ENCODE measurements at regions of chrX and their contacts with region 1.

Region 1: GRCh38 chrX:2640275-2641150 is 50.6 kb upstream of the CD99 start:
- DNase-seq: no peak
- ATAC-seq: no peak

Region 2: DNA sequence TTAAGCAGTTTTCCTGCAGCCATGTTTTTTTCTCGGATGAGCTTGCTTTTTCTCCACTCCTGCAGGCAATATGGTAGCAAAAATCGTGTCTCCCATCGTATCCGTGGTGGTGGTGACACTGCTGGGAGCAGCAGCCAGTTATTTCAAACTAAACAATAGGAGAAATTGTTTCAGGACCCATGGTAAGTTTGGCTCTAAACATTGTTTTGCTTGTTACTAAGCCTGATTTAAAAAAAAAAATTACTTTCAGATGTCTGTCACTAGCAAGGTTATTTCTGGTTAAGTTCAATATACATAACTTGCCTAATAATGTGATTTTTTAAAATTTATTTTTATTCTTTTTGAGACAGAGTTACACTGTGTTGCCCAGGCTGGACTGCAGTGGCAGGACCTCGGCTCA is 170.8 kb after region 1 on chrX:
- intact Hi-C with region 1: loop called (anchors 5 to 10 kb)
- DNase-seq: no peak
- ATAC-seq: no peak

Region 3: DNA sequence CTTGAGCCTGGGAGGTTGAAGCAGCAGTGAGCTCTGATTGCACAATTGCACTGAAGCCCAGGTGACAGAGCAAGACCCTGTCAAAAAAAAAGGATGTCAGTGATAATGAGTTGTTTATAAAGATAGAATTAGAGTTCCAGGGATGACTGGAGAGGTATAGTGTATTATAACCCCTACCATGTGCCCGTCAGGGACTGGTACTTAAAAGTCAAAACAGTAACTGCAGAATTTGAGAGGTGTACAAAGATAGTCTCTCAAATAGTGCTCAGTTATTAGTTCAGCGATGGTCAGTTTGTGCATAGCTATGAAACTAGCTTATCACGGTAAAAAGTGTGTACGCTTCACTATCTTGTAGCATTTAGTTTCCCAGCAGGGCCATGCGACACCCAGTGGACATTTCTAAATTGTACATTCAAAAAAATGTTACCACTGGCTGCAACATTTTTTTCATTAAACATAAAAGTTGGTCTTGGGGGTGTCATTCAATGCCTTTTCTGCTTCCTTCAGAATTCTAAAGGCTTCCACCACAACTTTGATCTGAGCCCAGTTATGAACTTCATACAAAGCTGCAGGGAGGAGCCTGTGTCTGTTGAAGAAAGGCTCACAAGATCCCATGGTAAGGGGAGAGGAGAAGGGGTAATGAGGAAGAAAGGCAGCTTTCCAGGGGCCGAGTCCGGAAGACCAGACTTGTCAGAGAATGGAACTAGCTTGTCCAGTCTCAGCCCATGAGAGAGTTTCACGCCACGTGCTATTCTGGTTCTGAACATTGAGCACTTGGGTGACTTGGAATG is 179.0 kb after region 1 on chrX:
- intact Hi-C with region 1: loop called (anchors 5 to 10 kb)
- DNase-seq: no peak
- ATAC-seq: peak; percentile 69

Region 4: GRCh38 chrX:3166670-3167455 is 526.4 kb after region 1 on chrX:
- intact Hi-C with region 1: no loop called
- DNase-seq: no peak
- ATAC-seq: no peak

Measured in left colon (tissue), 2 donors.